GM10248 (cell line): ENCODE measurements at regions of chr10 and their contacts with region 1.

Region 1: DNA sequence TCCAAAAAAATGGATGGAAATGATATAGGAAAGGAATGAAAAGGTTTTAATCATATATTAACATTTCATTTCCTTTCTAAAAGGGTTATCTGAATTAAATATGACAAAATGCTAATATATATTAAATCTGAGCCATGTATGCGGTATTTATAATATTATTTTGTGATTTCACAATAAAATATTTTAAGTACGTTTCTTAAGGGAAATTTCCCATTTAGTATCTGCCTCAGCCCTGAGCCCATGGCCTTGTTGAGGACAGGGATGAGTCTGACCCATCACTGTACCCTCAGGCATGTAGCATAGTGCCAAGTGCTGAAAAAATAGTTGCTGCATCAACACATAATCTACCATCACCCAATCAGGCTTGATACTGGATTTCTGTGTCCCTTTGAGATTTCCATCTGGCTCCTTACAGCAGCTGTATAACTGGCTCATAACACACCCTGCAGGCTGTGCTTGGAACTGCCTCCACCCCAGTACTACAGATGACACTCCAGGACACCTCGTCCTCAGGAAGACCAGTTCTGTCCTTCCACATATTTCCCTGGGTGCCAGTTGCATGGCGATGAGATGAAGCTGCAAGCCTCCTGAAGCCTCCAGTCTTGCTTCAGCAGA is 59.4 kb upstream of the ASAH2 start:
- DNase-seq: no peak
- CTCF ChIP-seq: peak; percentile 36

Region 2: DNA sequence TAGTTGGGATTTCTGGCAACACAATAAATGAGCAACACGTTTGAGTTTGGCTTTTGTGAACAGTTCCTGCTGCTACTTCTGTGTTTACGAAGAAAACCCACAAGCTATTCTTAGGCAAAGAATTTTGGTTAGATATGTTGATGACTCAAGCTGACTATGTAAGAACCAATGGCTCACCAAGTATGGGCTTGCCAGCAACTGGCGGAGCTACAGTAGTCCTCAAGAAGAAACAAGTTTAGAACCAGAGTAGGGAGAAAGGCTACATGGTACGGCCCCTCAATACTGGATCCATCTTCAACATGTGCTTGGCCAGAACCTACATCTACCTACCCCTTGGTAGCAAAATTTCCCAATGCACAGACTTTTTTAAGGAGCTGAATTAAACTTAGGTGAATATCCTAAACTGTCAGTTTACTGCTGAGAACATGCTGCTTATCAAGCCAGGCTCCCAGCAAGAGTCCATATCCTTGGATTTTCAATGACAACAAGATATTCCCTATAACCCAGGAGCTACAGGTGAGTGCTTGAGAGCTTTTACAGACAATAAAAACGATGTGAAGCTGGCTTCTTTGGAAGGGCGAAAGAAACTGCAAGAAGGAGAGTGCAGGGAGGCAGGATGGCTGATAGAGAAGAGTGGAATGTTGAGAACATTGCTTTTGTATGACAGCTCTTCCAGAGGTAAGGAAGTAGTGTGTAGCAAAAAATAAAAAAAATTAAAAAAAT is 14.9 kb after region 1 on chr10:
- CTCF ChIA-PET with region 1: interaction called, 43 read pairs
- POLR2A ChIA-PET with region 1: no interaction called
- DNase-seq: peak; percentile 42
- CTCF ChIP-seq: no peak

Region 3: GRCh38 chr10:50480054-50481007 is 169.7 kb after region 1 on chr10:
- CTCF ChIA-PET with region 1: no interaction called
- POLR2A ChIA-PET with region 1: no interaction called
- DNase-seq: no peak
- CTCF ChIP-seq: no peak